Naive thymus-derived CD8-positive, alpha-beta T cell (primary cell): ENCODE measurements at regions of chr4 and their contacts with region 1.

Region 1: GRCh38 chr4:108118490-108118889 is 50.2 kb downstream of the LEF1 start:
- DNase-seq: peak in 2 of 10 donors; percentile 21 to 41
- ATAC-seq: peak; percentile 20 to 44
- H3K4me3 Mint-ChIP-seq: peak overlapping the region; percentile 32 to 82 (median 70)
- H3K27ac Mint-ChIP-seq: peak overlapping the region; percentile 68 to 98 (median 93)
- H3K4me1 Mint-ChIP-seq: peaks cover 45 to 91% (median 87%) of the 10 kb centered on the region in 4 donors
- H3K27me3 Mint-ChIP-seq: no peaks in the 10 kb centered on the region

Region 2: GRCh38 chr4:107970063-107970798 is 148.3 kb before region 1 on chr4:
- POLR2A ChIA-PET with region 1: no interaction called
- DNase-seq: no peak
- ATAC-seq: no peak
- H3K4me3 Mint-ChIP-seq: no peak overlapping the region
- H3K27ac Mint-ChIP-seq: no peak overlapping the region
- H3K4me1 Mint-ChIP-seq: peaks cover 0 to 5% (median under 1%) of the 10 kb centered on the region in 4 donors
- H3K27me3 Mint-ChIP-seq: peaks cover 0 to 4% (median 0%) of the 10 kb centered on the region in 5 donors

Region 3: GRCh38 chr4:108080747-108081146 is 37.7 kb before region 1 on chr4:
- POLR2A ChIA-PET with region 1: interaction called, 18 read pairs
- DNase-seq: peak; percentile 48 to 87 (median 71)
- ATAC-seq: peak; percentile 79 to 91
- H3K4me3 Mint-ChIP-seq: peak overlapping the region; percentile 66 to 84 (median 81)
- H3K27ac Mint-ChIP-seq: peak overlapping the region; percentile 94 to 99 (median 98)
- H3K4me1 Mint-ChIP-seq: peaks cover 41 to 82% (median 72%) of the 10 kb centered on the region in 4 donors
- H3K27me3 Mint-ChIP-seq: no peaks in the 10 kb centered on the region

Region 4: GRCh38 chr4:108097990-108098553 is 20.4 kb before region 1 on chr4:
- POLR2A ChIA-PET with region 1: interaction called, 28 read pairs
- DNase-seq: no peak
- ATAC-seq: peak; percentile 39 to 65
- H3K4me3 Mint-ChIP-seq: peak overlapping the region; percentile 36 to 83 (median 69)
- H3K27ac Mint-ChIP-seq: peak overlapping the region; percentile 79 to 96 (median 89)
- H3K4me1 Mint-ChIP-seq: peaks cover 63 to 100% (median 93%) of the 10 kb centered on the region in 4 donors
- H3K27me3 Mint-ChIP-seq: no peaks in the 10 kb centered on the region

Region 5: GRCh38 chr4:108135549-108136209 is 17.2 kb after region 1 on chr4:
- POLR2A ChIA-PET with region 1: interaction called, 45 read pairs
- DNase-seq: no peak
- ATAC-seq: peak; percentile 14 to 15
- H3K4me3 Mint-ChIP-seq: peak overlapping the region; percentile 64 to 90 (median 82)
- H3K27ac Mint-ChIP-seq: peak overlapping the region; percentile 89 to 97 (median 93)
- H3K4me1 Mint-ChIP-seq: peaks cover 53 to 93% (median 90%) of the 10 kb centered on the region in 4 donors
- H3K27me3 Mint-ChIP-seq: no peaks in the 10 kb centered on the region

Region 6: GRCh38 chr4:108141213-108141950 is 22.9 kb after region 1 on chr4:
- POLR2A ChIA-PET with region 1: interaction called, 45 read pairs
- DNase-seq: peak in 1 of 10 donors; percentile 46
- ATAC-seq: peak in 1 of 2 donors; percentile 3
- H3K4me3 Mint-ChIP-seq: peak overlapping the region; percentile 68 to 90 (median 81)
- H3K27ac Mint-ChIP-seq: peak overlapping the region; percentile 90 to 97 (median 94)
- H3K4me1 Mint-ChIP-seq: peaks cover 50 to 94% (median 90%) of the 10 kb centered on the region in 4 donors
- H3K27me3 Mint-ChIP-seq: no peaks in the 10 kb centered on the region

Region 7: DNA sequence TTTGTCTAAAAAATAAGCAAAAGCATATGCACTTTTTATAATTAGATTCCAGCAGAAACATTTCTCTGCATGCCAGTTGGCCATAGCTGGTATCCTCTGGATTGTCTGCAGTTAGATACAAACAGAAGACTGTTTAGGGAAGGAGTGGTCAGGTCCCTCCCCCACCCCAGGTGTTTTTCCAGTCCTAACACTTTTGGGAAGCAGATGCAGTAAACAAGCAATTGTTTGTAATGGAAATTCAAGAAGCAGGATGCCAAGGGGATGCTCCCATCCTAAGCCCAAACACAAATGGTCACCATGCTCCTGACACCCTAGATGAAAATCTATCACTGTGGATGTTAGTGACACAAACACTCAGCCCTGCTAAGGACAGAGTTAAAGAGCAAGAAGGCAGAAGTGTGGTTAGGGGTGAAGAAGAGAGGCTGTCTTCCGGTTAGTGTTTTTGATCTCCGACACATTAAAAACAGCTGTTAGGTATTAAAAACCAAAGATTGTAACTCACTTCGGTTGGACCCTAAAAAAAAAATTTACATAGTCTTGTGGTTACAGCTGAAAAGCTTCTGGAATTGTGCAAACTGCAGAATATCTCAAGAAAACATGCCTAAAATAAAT is 42.4 kb after region 1 on chr4:
- POLR2A ChIA-PET with region 1: interaction called, 206 read pairs
- DNase-seq: peak in 4 of 10 donors; percentile 38 to 64 (median 56)
- ATAC-seq: peak; percentile 48 to 64
- H3K4me3 Mint-ChIP-seq: peak overlapping the region; percentile 84 to 100 (median 94)
- H3K27ac Mint-ChIP-seq: peak overlapping the region; percentile 73 to 96 (median 90)
- H3K4me1 Mint-ChIP-seq: peaks cover 20 to 58% (median 44%) of the 10 kb centered on the region in 4 donors
- H3K27me3 Mint-ChIP-seq: no peaks in the 10 kb centered on the region

Region 8: GRCh38 chr4:108270466-108271450 is 152.3 kb after region 1 on chr4:
- POLR2A ChIA-PET with region 1: no interaction called
- DNase-seq: no peak
- ATAC-seq: no peak
- H3K4me3 Mint-ChIP-seq: no peak overlapping the region
- H3K27ac Mint-ChIP-seq: peak overlapping the region in 1 of 10 donors; percentile 39
- H3K4me1 Mint-ChIP-seq: peaks cover 2 to 19% (median 10%) of the 10 kb centered on the region in 4 donors
- H3K27me3 Mint-ChIP-seq: no peaks in the 10 kb centered on the region